B cell (primary cell): ENCODE measurements at regions of chr1 and their contacts with region 1.

Region 1: DNA sequence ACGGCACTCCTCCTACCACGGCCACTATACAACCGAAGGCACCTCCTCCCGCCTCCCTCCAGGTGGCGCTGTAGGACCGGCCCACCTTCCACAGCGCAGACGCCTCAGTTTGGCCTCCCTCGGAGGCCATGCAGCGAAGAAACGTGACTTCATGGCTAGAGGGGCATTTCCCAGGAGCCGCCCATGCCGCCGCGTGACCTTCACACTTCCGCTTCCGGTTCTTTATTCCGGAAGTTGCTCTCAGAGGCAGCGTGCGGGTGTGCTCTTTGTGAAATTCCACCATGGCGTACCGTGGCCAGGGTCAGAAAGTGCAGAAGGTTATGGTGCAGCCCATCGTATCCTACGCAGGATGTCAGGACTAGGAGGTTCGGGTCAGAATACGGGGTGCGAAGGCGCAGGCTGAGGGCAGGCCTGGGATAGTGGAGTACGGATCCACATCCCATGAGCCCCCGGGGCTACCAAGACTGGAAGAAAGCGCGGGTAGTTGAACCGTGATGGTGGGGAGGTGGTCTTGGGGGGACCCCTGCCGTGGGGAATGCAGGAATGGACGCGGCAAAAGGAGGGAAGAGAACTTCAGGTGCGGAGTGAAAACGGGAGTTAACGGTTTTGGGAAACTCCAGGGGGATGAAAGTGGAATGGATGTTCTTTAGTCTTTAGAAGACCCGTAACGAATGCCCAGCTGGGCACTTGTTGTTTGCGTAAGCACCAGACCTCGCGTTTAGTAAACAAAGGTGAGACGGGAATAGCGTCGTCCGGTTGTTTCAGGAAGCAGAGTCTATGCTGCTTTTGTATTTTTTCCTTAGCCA is at the start of gene SNRPE:
- DNase-seq: peak; percentile 98
- ATAC-seq: peak; percentile 99
- H3K4me3 ChIP-seq: peak within 1 kb of the TSS; percentile 82 to 99 (median 96)
- H3K4me3 Mint-ChIP-seq: peak within 1 kb of the TSS; percentile 98
- H3K27ac ChIP-seq: peak within 1 kb of the TSS; percentile 57 to 81
- H3K27ac Mint-ChIP-seq: peak within 1 kb of the TSS; percentile 96
- H3K4me1 ChIP-seq: peaks cover 9 to 17% of the 10 kb centered on the region in 2 donors
- H3K4me1 Mint-ChIP-seq: peaks cover 21% of the 10 kb centered on the region
- H3K27me3 ChIP-seq: no peaks in the 10 kb centered on the region
- H3K27me3 Mint-ChIP-seq: no peaks in the 10 kb centered on the region
- CTCF ChIP-seq: peak; percentile 93
- total RNA-seq, gene SNRPE: 56.0 and 80.8 TPM in 2 replicates

Region 2: DNA sequence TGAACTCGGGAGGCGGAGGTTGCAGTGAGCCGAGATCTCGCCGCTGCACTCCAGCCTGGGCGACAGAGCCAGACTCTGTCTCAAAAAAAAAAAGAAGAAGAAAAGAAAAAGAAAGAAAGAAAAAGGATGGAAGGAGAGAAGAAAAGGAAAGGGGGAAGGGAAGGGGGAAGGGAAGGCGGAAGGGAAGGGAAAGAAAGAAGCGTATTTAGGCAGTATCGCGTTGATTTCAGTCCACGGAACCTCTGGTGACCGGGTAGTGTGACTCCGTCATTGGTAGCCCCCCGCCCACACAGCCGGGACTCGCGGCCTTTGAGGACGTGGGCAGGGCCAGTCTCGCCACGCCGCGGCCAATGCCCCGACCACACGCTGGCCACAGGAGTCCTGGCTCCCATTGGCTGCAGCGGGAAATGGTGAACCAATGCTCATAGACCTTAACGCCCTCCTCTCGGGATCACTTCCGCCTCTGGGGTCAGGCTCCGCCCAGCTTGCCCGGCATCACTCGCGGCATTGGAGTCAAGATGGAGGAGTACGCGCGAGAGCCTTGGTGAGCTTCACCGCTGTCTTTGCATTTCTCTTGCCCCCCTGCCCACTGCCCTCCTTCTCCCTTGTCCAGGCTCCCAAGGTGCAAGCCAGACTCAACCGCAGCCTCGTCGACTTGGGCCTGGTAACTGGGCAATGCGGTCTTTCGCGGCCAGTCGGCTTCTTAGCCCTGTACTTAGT is 1906.4 kb before region 1 on chr1 and contains the start of gene TIMM17A:
- CTCF ChIA-PET with region 1: no interaction called
- POLR2A ChIA-PET with region 1: no interaction called
- intact Hi-C with region 1: loop called (anchors 10 kb)
- DNase-seq: peak; percentile 95
- ATAC-seq: peak; percentile 99
- H3K4me3 ChIP-seq: peak within 1 kb of the TSS; percentile 72 to 98 (median 75)
- H3K4me3 Mint-ChIP-seq: peak within 1 kb of the TSS; percentile 98
- H3K27ac ChIP-seq: peak within 1 kb of the TSS; percentile 73 to 89
- H3K27ac Mint-ChIP-seq: peak within 1 kb of the TSS; percentile 96
- H3K4me1 ChIP-seq: peaks cover 12 to 15% of the 10 kb centered on the region in 2 donors
- H3K4me1 Mint-ChIP-seq: peaks cover 26% of the 10 kb centered on the region
- H3K27me3 ChIP-seq: no peaks in the 10 kb centered on the region
- H3K27me3 Mint-ChIP-seq: no peaks in the 10 kb centered on the region
- CTCF ChIP-seq: no peak
- total RNA-seq, gene TIMM17A: 31.5 and 32.3 TPM in 2 replicates

Region 3: GRCh38 chr1:204128964-204129896 is 267.6 kb after region 1 on chr1:
- CTCF ChIA-PET with region 1: interaction called, 25 read pairs
- POLR2A ChIA-PET with region 1: no interaction called
- intact Hi-C with region 1: loop called (anchors 1 kb)
- DNase-seq: peak; percentile 76
- ATAC-seq: peak; percentile 83
- H3K4me3 ChIP-seq: no peak overlapping the region
- H3K4me3 Mint-ChIP-seq: peak overlapping the region; percentile 34
- H3K27ac ChIP-seq: no peak overlapping the region
- H3K27ac Mint-ChIP-seq: no peak overlapping the region
- H3K4me1 ChIP-seq: peaks cover 7 to 8% of the 10 kb centered on the region in 2 donors
- H3K4me1 Mint-ChIP-seq: peaks cover 5% of the 10 kb centered on the region
- H3K27me3 ChIP-seq: peaks cover 0 to 12% (median 2%) of the 10 kb centered on the region in 4 experiments
- H3K27me3 Mint-ChIP-seq: peaks cover 14% of the 10 kb centered on the region
- CTCF ChIP-seq: peak; percentile 87

Region 4: DNA sequence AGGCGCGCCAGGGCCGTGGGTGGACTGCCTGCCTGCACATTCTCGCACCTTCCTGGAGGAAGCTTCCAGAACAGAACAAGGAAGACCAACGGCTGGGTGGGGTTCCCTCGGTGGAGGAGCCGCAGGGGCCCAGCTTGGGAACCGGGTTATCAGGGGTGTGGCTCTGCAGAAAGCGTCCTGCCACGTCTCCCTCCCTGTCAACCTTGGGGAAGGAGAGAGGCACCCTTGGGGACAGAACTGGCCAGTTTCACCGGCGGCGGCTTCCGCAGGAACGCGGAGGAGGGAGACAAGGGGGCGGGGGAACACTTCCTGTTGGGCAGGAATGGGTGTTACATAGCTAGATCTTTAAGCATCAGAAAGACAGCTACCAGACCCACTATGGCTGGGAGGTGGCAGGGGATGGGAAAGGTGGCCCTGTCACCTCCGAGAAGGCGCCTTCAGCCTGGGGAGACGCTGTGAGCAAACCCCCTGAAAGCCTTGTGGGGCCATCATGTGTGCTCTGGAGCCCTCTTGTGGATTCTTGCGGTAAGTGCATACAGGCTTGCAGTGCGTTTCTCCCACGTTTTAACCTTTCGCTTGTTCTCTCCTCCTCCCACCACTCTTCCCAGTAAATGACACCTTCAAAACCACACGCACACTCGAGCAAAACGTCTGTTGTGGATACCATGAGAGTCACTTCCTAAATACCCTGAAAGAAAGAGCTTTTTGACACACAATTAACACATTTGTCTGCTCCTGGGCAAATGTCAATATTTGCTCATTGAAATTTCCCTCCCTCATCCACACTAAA is 501.9 kb after region 1 on chr1:
- CTCF ChIA-PET with region 1: interaction called, 5 read pairs
- POLR2A ChIA-PET with region 1: no interaction called
- intact Hi-C with region 1: loop called (anchors 1 kb)
- DNase-seq: peak; percentile 86
- ATAC-seq: peak; percentile 95
- H3K4me3 ChIP-seq: peak overlapping the region; percentile 39 to 71 (median 51)
- H3K4me3 Mint-ChIP-seq: peak overlapping the region; percentile 35
- H3K27ac ChIP-seq: no peak overlapping the region
- H3K27ac Mint-ChIP-seq: no peak overlapping the region
- H3K4me1 ChIP-seq: peaks cover 10 to 17% of the 10 kb centered on the region in 2 donors
- H3K4me1 Mint-ChIP-seq: peaks cover 8% of the 10 kb centered on the region
- H3K27me3 ChIP-seq: peaks cover 0 to 44% (median 13%) of the 10 kb centered on the region in 4 experiments
- H3K27me3 Mint-ChIP-seq: peaks cover 55% of the 10 kb centered on the region
- CTCF ChIP-seq: peak; percentile 95

Region 5: DNA sequence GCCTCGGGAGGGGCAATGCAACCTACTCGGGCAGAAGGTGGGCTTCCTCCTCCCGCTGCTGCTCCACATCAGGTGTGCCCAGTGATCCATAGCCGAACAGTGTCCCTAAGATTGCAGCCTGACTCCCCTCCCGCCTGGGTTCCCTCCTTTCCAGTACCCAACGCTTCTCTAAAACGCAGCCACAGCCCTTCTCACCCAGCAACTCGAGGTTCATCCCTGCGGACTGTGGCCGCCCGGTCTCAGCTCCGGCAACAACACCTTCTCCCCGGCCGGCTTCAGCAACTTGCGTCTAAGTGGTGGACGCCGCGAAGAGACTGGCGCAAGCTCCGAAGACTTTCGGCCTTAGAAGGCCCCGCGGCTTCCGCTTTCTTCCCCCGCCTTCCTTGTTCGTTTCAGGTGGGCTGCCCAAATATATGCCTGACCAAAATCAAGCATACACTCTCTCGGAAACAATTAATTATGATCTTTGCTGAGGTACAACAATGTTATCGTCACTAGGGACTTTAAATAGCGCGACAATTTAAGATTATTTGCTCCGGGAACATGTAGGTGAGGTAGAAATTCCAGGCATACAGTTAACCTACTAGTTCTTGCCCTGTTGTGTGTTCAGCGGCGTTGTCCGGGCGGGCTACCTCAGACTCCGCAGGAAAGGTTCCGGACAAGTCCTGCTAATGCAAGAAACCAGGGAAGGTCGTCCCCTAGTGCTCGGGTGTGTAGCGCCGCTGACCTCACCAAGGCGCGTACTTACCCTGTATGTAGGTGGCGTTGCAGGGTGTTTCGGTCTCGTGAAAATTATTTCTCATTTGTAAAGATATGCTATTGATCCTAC is 1260.3 kb after region 1 on chr1 and contains the start of gene RBBP5:
- CTCF ChIA-PET with region 1: no interaction called
- POLR2A ChIA-PET with region 1: no interaction called
- intact Hi-C with region 1: loop called (anchors 10 kb)
- DNase-seq: peak; percentile 99
- ATAC-seq: peak; percentile 93
- H3K4me3 ChIP-seq: peak within 1 kb of the TSS; percentile 74 to 99 (median 87)
- H3K4me3 Mint-ChIP-seq: peak within 1 kb of the TSS; percentile 98
- H3K27ac ChIP-seq: peak within 1 kb of the TSS; percentile 95 to 96
- H3K27ac Mint-ChIP-seq: peak within 1 kb of the TSS; percentile 100
- H3K4me1 ChIP-seq: peaks cover 31 to 40% of the 10 kb centered on the region in 2 donors
- H3K4me1 Mint-ChIP-seq: peaks cover 48% of the 10 kb centered on the region
- H3K27me3 ChIP-seq: no peaks in the 10 kb centered on the region
- H3K27me3 Mint-ChIP-seq: no peaks in the 10 kb centered on the region
- CTCF ChIP-seq: peak; percentile 73
- total RNA-seq, gene RBBP5: 18.5 and 31.7 TPM in 2 replicates